ENCODE measurements at regions of chr3 and their contacts with region 1.

Region 1: GRCh38 chr3:128133273-128134084 is 9.9 kb upstream of the RUVBL1 start:
- DNase-seq: peak; percentile 69
- H3K4me3 ChIP-seq: no peak overlapping the region
- H3K27ac ChIP-seq: no peak overlapping the region
- H3K4me1 ChIP-seq: no peaks in the 10 kb centered on the region
- H3K27me3 ChIP-seq: peaks cover 20% of the 10 kb centered on the region
- CTCF ChIP-seq: peak; percentile 76

Region 2: DNA sequence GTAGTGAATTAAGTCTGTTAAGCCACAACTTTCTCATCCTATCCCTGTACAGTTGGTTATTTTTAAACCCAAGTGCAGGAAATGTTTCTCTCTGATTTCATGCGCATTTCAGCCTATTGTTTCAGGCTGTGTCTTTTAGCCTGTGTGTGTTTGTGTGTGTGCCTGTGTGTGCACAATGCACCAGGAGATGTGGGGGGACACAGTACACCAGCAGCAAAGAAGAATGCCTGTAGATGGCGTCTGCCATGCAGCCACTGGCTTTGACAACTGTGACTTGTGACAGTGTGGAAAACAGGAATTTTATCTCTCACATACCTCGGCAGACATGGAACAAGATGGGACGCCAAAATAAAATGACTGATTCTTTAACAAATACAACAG is 1194.2 kb before region 1 on chr3:
- CTCF ChIA-PET with region 1: no interaction called
- POLR2A ChIA-PET with region 1: no interaction called
- intact Hi-C with region 1: no loop called
- DNase-seq: no peak
- H3K4me3 ChIP-seq: no peak overlapping the region
- H3K27ac ChIP-seq: no peak overlapping the region
- H3K4me1 ChIP-seq: no peaks in the 10 kb centered on the region
- H3K27me3 ChIP-seq: no peaks in the 10 kb centered on the region
- CTCF ChIP-seq: peak; percentile 46

Region 3: DNA sequence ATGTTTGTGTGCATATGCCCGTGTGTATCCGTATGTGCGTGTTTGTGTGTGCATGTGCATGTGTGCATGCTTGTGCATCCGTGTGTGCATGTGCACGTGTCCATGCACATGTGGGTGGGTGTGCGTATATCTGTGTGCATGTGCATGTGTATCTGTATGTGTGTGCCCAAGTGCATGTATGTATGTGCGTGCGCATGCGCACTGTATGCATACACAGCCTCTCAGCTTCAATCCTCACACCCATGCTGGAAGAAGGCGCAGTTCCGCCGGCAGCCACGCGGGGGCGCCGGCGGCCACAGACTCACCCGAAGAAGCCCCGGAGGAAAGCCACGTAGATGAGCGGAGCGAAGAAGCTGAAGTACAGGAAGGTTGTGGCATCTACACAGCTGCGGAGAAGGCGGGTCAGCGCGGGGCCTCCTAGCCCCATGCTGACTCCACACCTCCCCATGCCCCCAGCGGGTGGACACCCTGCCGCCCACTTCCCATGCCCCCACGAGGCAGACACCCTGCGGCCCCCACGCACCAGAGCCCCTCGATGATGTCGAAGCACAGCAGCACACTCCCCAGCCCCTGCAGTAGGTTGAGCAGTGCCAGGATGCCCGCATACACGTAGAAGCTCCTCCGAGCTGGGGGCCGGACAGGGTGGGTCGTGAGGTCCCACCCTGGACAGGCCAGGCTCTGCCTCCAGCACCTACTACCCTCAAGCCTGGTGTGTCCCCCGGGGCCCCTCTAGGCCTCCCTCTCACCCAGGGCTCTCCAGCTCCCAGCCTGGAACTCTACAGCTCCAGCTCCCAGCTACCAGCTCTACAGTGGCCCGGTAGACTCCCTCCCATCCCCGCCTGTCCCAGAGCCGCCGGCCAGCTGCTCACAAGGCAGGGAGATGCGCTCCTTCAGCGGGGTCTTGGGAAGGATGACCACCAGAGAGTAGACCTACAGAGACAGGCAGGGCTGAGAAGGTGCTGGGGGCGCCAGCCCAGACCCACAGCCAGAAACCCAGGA is 558.3 kb before region 1 on chr3:
- CTCF ChIA-PET with region 1: interaction called, 10 read pairs
- POLR2A ChIA-PET with region 1: no interaction called
- intact Hi-C with region 1: no loop called
- DNase-seq: peak; percentile 92
- H3K4me3 ChIP-seq: no peak overlapping the region
- H3K27ac ChIP-seq: no peak overlapping the region
- H3K4me1 ChIP-seq: no peaks in the 10 kb centered on the region
- H3K27me3 ChIP-seq: no peaks in the 10 kb centered on the region
- CTCF ChIP-seq: peak; percentile 99

Region 4: GRCh38 chr3:127652231-127652995 is 481.1 kb before region 1 on chr3:
- CTCF ChIA-PET with region 1: interaction called, 4 read pairs
- POLR2A ChIA-PET with region 1: no interaction called
- intact Hi-C with region 1: loop called (anchors 5 kb)
- DNase-seq: peak; percentile 73
- H3K4me3 ChIP-seq: no peak overlapping the region
- H3K27ac ChIP-seq: no peak overlapping the region
- H3K4me1 ChIP-seq: no peaks in the 10 kb centered on the region
- H3K27me3 ChIP-seq: no peaks in the 10 kb centered on the region
- CTCF ChIP-seq: peak; percentile 89

Region 5: GRCh38 chr3:128011140-128011539 is 122.3 kb before region 1 on chr3:
- CTCF ChIA-PET with region 1: no interaction called
- POLR2A ChIA-PET with region 1: no interaction called
- intact Hi-C with region 1: loop called (anchors 2 kb)
- DNase-seq: peak; percentile 65
- H3K4me3 ChIP-seq: no peak overlapping the region
- H3K27ac ChIP-seq: no peak overlapping the region
- H3K4me1 ChIP-seq: no peaks in the 10 kb centered on the region
- H3K27me3 ChIP-seq: no peaks in the 10 kb centered on the region
- CTCF ChIP-seq: peak; percentile 72

Region 6: DNA sequence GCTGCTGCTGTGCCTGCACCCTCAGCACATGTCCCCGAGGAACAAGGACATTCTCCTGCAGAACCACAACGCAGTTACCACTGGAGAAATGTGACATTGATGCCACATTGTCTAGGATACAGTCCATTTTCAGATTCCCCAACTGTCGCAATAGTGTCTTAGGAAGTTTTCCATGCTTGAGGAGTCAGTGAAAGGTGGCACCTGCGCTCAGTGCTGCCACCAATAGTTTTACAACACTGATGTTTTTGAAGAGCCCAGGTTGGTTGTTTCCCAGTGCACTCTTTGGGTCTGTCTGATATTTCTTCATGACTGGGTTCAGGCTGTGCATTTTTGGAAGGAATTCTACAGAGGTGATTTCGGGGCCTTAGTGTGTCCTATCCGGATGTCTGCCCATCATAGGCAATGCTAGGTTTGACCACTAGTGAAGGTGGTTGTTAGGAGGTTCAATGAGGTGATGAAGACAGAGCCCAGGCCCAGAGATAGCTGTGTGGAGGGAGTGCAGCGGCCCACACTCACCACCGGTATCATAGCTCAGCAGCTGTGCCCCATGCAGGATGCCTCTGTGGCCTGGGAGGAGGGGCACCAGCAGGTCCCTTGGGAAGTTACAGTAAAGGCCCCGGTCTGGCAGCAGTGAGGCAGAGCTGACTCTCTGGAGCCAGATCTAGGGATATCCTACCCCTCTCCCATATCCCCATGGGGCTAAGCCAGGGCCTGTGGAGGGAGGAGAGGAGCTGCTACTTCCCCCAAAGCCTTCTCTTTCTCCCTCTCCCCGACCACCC is 236.6 kb after region 1 on chr3:
- CTCF ChIA-PET with region 1: no interaction called
- POLR2A ChIA-PET with region 1: no interaction called
- intact Hi-C with region 1: no loop called
- DNase-seq: no peak
- H3K4me3 ChIP-seq: no peak overlapping the region
- H3K27ac ChIP-seq: no peak overlapping the region
- H3K4me1 ChIP-seq: no peaks in the 10 kb centered on the region
- H3K27me3 ChIP-seq: no peaks in the 10 kb centered on the region
- CTCF ChIP-seq: no peak

Measured in A673 (cell line).